ENCODE measurements at regions of chr12 and their contacts with region 1.

Region 1: GRCh38 chr12:78210894-78211302 is 380.2 kb downstream of the NAV3 start:
- DNase-seq: peak; percentile 77
- H3K4me3 ChIP-seq: no peak overlapping the region
- H3K27ac ChIP-seq: no peak overlapping the region
- H3K4me1 ChIP-seq: peaks cover 6% of the 10 kb centered on the region
- H3K27me3 ChIP-seq: no peaks in the 10 kb centered on the region
- CTCF ChIP-seq: no peak

Region 2: DNA sequence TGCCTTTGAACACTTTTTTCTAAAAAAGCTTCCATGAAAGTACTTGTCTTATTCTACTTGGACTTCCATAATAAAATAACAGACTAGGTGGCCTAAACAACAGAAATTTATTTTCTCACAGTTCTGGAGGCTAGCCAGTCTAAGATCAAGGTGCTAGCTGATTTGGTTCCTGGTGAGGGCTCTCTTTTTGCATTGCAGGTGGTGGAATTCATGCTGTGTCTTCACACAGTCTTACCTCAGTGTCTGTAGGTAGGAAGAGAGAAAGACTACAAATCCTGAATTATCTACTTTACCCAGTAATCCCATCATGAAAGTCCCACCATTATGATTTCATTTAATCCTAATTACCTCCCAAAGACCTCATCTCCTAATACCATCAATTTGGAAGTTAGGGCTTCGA is 24.2 kb before region 1 on chr12:
- CTCF ChIA-PET with region 1: no interaction called
- dilution Hi-C with region 1: no loop called
- in situ Hi-C with region 1: no loop called
- intact Hi-C with region 1: loop called (anchors 1 kb)
- DNase-seq: no peak
- H3K4me3 ChIP-seq: no peak overlapping the region
- H3K27ac ChIP-seq: no peak overlapping the region
- H3K4me1 ChIP-seq: peaks cover 7% of the 10 kb centered on the region
- H3K27me3 ChIP-seq: no peaks in the 10 kb centered on the region
- CTCF ChIP-seq: no peak

Region 3: GRCh38 chr12:78198896-78199295 is 12.0 kb before region 1 on chr12:
- CTCF ChIA-PET with region 1: no interaction called
- dilution Hi-C with region 1: no loop called
- in situ Hi-C with region 1: no loop called
- intact Hi-C with region 1: no loop called
- DNase-seq: no peak
- H3K4me3 ChIP-seq: no peak overlapping the region
- H3K27ac ChIP-seq: no peak overlapping the region
- H3K4me1 ChIP-seq: peaks cover 10% of the 10 kb centered on the region
- H3K27me3 ChIP-seq: no peaks in the 10 kb centered on the region
- CTCF ChIP-seq: no peak

Measured in mammary epithelial cell (primary cell).